Activated CD8-positive, alpha-beta memory T cell treated with anti-CD3 and anti-CD28 coated beads, Interleukin-2, amount 10 ng/mL, durations not matched to agents 7 days and 5 days (primary cell): ENCODE measurements at regions of chr17 and their contacts with region 1.

Region 1: GRCh38 chr17:65294179-65294720 is 157.1 kb downstream of the RGS9 start:
- DNase-seq: peak; percentile 70
- ATAC-seq: peak; percentile 87
- H3K4me3 Mint-ChIP-seq: no peak overlapping the region
- H3K27ac Mint-ChIP-seq: no peak overlapping the region
- H3K4me1 Mint-ChIP-seq: no peaks in the 10 kb centered on the region
- H3K27me3 Mint-ChIP-seq: peaks cover 25% of the 10 kb centered on the region

Region 2: GRCh38 chr17:65556014-65556909 is 262.0 kb after region 1 on chr17:
- CTCF ChIA-PET with region 1: interaction called, 18 read pairs
- DNase-seq: peak; percentile 90
- ATAC-seq: peak; percentile 59
- H3K4me3 Mint-ChIP-seq: no peak overlapping the region
- H3K27ac Mint-ChIP-seq: no peak overlapping the region
- H3K4me1 Mint-ChIP-seq: peaks cover 19% of the 10 kb centered on the region
- H3K27me3 Mint-ChIP-seq: peaks cover 14% of the 10 kb centered on the region

Region 3: GRCh38 chr17:66165513-66166123 is 871.4 kb after region 1 on chr17:
- CTCF ChIA-PET with region 1: interaction called, 23 read pairs
- DNase-seq: no peak
- ATAC-seq: no peak
- H3K4me3 Mint-ChIP-seq: no peak overlapping the region
- H3K27ac Mint-ChIP-seq: no peak overlapping the region
- H3K4me1 Mint-ChIP-seq: peaks cover 7% of the 10 kb centered on the region
- H3K27me3 Mint-ChIP-seq: no peaks in the 10 kb centered on the region